ENCODE measurements at regions of chr4 and their contacts with region 1.

Region 1: GRCh38 chr4:142846729-142847596 is 862 bp upstream of the INPP4B start:
- DNase-seq: peak; percentile 56 to 73
- ATAC-seq: peak; percentile 86

Region 2: GRCh38 chr4:142126890-142127497 is 720.0 kb before region 1 on chr4:
- intact Hi-C with region 1: loop called in 1 of 2 experiments (anchors 5 kb)
- DNase-seq: peak; percentile 32 to 49
- ATAC-seq: peak; percentile 54